OCI-LY7 (cell line): ENCODE measurements at regions of chr4 and their contacts with region 1.

Region 1: DNA sequence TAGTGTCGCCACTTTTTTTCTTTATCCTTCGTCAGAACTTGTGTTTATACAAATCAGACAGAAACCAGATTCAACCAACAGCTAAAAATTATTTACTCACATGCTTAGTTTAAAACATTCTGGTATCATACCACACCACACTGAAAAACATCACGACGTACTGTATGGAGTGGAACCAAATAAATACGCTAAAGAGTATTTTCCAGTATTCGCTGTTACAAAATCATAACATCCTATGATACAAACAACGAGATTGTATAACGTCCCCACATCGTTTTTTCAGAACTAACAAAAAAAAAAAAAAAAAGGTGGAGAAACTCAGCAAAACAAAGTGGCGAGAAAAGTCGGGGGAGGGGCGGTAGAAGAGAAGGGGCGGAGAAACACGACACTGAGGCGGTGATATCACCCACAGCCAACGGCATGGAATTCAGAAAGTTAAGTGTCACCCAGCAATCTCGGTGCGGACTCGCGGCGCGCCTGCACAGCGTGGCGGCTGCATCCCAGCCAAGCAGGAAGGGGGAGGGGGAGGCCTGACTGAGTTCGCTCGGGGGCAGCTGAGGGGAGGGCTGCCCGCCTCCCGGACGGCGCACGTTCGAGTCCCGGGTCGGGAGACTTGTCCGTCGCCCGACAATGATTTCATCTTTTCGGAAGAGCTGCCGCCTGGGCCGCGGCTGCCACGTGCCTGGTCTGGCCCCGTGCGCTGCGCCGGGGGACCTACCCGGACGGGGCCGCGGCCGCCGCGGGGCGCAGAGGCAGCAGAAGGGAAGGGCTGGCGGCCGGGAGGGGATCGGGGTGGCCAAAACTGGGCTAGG is 920 bp downstream of the SETD7 start:
- DNase-seq: peak; percentile 91
- H3K4me3 ChIP-seq: peak overlapping the region; percentile 81
- H3K27ac ChIP-seq: peak overlapping the region; percentile 87
- H3K4me1 ChIP-seq: peaks cover 72% of the 10 kb centered on the region
- CTCF ChIP-seq: no peak

Region 2: DNA sequence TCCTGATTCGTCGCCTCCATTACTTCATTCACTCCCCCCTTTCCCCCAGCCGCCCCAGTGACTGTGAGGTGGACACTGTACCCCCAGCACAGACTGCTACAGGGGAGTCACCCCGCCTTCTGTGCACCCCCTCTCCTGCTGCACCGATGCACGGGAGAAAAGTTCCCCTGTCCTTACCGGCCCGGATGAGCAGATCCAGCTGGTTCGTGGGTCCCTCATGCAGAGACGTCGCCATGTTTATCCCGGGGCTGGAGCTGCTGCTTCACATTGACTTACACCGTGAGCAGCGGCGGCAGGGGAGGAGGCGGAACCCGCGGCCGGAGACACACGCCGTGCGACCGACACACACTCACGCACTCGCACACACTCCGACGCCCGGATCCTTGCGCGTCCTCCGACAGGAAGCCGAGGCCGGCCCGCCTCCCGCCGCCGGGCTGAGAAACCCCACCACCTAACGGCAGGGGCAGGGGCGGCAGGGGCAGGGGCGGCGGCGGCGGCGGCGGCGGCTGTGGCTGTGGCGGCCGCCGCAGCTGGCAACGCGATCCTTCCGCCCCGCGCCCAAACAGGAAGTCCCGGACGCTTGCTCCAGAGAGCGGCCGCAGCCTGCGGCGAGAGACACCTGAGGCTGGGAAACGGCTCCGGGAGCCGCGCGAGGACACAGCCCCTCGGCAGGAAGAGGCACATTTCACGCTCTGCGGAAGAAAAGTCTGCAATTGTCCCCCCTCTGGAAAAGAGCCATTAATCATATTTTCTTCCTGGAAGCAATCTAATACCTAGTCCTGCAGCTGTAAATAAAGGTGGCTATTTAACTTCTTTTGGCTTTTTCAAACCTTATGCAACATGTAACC is 470.9 kb before region 1 on chr4:
- CTCF ChIA-PET with region 1: no interaction called
- POLR2A ChIA-PET with region 1: no interaction called
- intact Hi-C with region 1: loop called (anchors 1 kb)
- DNase-seq: peak; percentile 93
- H3K4me3 ChIP-seq: peak overlapping the region; percentile 91
- H3K27ac ChIP-seq: peak overlapping the region; percentile 95
- H3K4me1 ChIP-seq: peaks cover 22% of the 10 kb centered on the region
- CTCF ChIP-seq: peak; percentile 46

Region 3: GRCh38 chr4:139295206-139295941 is 259.7 kb before region 1 on chr4:
- CTCF ChIA-PET with region 1: interaction called, 3 read pairs
- POLR2A ChIA-PET with region 1: interaction called, 4 read pairs
- intact Hi-C with region 1: loop called (anchors 5 kb)
- DNase-seq: peak; percentile 97
- H3K4me3 ChIP-seq: peak overlapping the region; percentile 86
- H3K27ac ChIP-seq: peak overlapping the region; percentile 65
- H3K4me1 ChIP-seq: peaks cover 32% of the 10 kb centered on the region
- CTCF ChIP-seq: peak; percentile 95

Region 4: GRCh38 chr4:139540632-139541031 is 14.5 kb before region 1 on chr4:
- CTCF ChIA-PET with region 1: interaction called, 4 read pairs
- POLR2A ChIA-PET with region 1: interaction called, 11 read pairs
- intact Hi-C with region 1: no loop called
- DNase-seq: no peak
- H3K4me3 ChIP-seq: no peak overlapping the region
- H3K27ac ChIP-seq: no peak overlapping the region
- H3K4me1 ChIP-seq: no peaks in the 10 kb centered on the region
- CTCF ChIP-seq: no peak

Region 5: DNA sequence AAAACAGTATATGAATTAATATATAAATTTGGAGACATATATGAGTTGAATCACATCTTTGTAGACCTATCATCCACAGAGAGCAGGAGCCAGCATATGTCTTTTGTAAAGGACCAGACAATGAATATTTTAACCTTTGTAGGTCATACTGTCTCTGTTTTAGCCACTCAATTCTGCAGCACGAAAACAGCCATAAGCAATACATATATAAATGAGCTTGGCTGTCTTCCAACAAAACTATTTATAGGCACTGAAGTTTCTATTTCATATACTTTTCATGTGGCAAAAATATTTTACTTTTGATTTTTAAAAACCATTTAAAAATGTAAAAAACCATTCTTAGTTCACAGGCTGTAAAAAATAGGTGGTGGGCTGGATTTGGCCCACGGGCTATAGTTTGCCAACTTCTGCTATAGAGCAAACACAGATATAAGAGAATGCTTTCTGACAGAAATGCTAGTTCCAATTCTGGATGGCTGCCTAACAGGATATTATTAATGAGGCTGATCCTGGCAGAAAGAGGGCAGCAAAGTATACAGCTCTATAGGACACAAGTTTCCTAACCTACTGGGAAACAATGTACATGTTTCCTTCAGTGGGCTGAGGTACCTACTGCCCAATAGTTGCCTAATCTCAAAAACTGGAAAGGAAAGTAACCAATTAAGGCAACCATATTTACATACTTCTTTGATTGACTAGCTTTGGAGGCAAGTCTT is 1071.7 kb after region 1 on chr4:
- CTCF ChIA-PET with region 1: no interaction called
- POLR2A ChIA-PET with region 1: no interaction called
- intact Hi-C with region 1: loop called (anchors 10 kb)
- DNase-seq: no peak
- H3K4me3 ChIP-seq: no peak overlapping the region
- H3K27ac ChIP-seq: no peak overlapping the region
- H3K4me1 ChIP-seq: peaks cover 41% of the 10 kb centered on the region
- CTCF ChIP-seq: peak; percentile 39; the same call in 1 of the 2 replicates

Region 6: GRCh38 chr4:140807491-140808252 is 1252.6 kb after region 1 on chr4:
- CTCF ChIA-PET with region 1: no interaction called
- POLR2A ChIA-PET with region 1: no interaction called
- intact Hi-C with region 1: loop called (anchors 5 kb)
- DNase-seq: peak; percentile 91
- H3K4me3 ChIP-seq: peak overlapping the region; percentile 53
- H3K27ac ChIP-seq: peak overlapping the region; percentile 98
- H3K4me1 ChIP-seq: peaks cover 91% of the 10 kb centered on the region
- CTCF ChIP-seq: 0 out of 2 replicates have a peak, but pooled peaks have one; percentile 30